Gastrocnemius medialis (tissue), 4 donors: ENCODE measurements at regions of chr15 and their contacts with region 1.

Region 1: DNA sequence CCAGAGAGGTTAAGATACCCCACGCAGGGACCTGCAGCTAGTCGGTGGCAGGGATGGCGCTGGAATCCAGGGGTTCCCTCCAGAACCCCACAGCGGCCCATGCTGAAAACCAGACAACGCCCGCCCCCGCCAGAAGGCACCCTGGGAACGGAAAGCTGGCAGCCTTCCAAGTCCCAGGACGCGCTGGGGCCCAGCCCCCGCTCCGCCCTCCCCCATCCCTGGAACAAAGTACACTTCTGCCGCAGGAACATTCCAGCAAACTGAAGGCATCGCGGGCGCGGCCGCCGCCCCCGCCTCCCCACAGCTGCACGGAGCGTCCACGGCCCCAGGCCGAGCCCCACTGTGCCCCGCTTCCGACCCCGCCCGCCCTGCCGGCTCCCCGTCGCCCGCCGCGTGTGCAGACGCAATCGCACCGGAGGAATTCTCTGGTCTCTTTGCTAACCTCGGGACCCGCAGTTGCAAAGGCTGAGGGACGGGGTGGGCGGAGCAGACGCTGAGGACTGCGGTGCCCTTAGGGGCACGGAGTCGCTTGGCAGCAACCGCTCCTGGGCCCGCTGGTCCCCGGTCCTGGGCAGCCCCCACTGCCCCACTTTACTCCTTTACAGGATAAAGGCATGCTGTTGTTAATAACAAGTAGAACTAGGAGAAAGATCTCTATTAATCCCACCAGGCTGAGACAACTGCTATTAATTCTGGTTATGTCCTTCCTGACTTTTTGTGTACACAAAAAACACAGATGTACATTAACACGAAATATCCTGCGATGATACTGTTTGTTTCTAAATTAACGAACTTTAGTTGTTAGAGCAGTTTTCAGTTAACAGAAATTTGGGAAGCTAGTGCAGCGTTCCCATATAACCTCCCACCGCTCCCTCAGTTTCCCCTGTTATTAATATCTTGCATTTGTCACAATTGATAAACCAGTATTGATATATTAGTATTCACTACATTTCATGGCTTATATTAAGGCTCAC is 45.0 kb upstream of the RNU6-1 start:
- DNase-seq: peak; percentile 55 to 68
- ATAC-seq: peak; percentile 67 to 79
- H3K4me3 ChIP-seq: peak overlapping the region; percentile 59 to 71 (median 64)
- H3K27ac ChIP-seq: peak overlapping the region; percentile 53 to 79 (median 76)
- H3K4me1 ChIP-seq: peaks cover 10 to 19% of the 10 kb centered on the region in 2 donors
- H3K27me3 ChIP-seq: no peaks in the 10 kb centered on the region
- CTCF ChIP-seq: no peak
- POLR2A ChIP-seq: peak in 1 of 2 donors; percentile 29

Region 2: GRCh38 chr15:67413770-67414394 is 470.9 kb before region 1 on chr15:
- in situ Hi-C with region 1: no loop called
- intact Hi-C with region 1: no loop called
- DNase-seq: no peak
- ATAC-seq: no peak
- H3K4me3 ChIP-seq: no peak overlapping the region
- H3K27ac ChIP-seq: no peak overlapping the region
- H3K4me1 ChIP-seq: no peaks in the 10 kb centered on the region
- H3K27me3 ChIP-seq: no peaks in the 10 kb centered on the region
- CTCF ChIP-seq: no peak
- POLR2A ChIP-seq: no peak

Region 3: DNA sequence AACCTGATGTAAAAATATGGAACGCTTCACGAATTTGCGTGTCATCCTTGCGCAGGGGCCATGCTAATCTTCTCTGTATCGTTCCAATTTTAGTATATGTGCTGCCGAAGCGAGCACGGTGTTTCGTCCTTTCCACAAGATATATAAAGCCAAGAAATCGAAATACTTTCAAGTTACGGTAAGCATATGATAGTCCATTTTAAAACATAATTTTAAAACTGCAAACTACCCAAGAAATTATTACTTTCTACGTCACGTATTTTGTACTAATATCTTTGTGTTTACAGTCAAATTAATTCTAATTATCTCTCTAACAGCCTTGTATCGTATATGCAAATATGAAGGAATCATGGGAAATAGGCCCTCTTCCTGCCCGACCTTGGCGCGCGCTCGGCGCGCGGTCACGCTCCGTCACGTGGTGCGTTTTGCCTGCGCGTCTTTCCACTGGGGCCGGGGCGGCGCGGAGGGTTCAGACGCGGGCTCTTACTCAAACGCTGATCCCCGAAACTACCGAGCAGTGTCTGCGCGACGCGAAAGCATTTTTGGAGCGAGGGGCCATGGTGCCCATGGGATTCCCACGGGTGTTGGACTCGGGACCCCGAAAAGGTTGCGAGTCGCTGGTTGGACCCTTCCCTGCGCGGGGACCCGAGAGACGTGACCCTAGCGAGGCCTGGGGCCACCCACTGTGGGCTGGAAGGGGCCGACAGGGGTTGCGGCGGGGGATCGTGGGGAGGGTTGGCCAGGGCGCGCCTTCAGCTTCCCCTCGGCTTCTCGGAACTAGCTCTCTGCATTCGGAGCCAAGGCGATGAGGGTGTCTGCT is 44.7 kb before region 1 on chr15 and contains the start of gene RNU6-1:
- in situ Hi-C with region 1: no loop called
- intact Hi-C with region 1: no loop called
- DNase-seq: peak; percentile 90 to 96
- ATAC-seq: peak; percentile 88 to 94
- H3K4me3 ChIP-seq: peak within 1 kb of the TSS; percentile 94 to 99 (median 96)
- H3K27ac ChIP-seq: peak within 1 kb of the TSS; percentile 97 to 100 (median 99)
- H3K4me1 ChIP-seq: peaks cover 20 to 28% of the 10 kb centered on the region in 2 donors
- H3K27me3 ChIP-seq: no peaks in the 10 kb centered on the region
- CTCF ChIP-seq: peak in 1 of 5 experiments; percentile 31
- POLR2A ChIP-seq: peak; percentile 90 to 95
- total RNA-seq, gene RNU6-1: not detected

Region 4: DNA sequence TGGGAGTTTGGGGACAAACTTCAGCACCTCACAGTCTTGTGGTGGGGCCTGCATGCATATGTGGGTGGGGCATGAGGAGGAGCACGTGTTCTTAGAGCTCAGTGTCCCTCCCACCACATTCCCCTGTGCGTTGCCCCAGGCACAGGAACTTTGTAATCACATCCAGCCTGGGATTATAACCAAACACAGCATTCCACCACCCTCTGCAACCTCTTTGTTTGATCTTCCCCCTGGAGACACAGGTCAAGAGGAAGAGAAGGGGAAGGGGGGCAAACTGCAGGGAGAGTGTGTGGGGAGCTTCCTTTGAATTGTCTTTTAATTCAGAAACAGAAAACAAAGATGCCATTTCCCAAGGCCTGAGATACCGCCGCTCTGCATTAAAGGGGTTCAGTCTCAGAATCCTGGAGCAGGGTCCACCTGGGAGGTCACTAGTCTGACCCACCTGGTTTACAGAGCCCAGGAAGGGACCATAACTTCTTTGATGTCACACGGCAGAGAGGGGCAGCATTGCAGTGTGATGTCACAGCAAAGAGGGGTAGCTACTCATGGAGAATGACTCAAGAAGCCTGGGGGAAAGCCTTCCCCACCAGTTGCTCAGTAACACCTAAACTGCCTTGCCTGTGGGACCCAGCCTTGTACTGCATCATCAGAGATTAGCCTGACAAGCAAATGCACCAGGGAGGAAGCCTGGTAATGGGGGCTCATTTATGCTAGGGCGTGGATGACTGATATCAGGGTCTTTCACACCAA is 61.3 kb after region 1 on chr15:
- in situ Hi-C with region 1: loop called in 1 of 4 experiments (anchors 10 kb)
- intact Hi-C with region 1: no loop called
- DNase-seq: no peak
- ATAC-seq: no peak
- H3K4me3 ChIP-seq: no peak overlapping the region
- H3K27ac ChIP-seq: peak overlapping the region in 2 of 4 donors; percentile 46 to 49
- H3K4me1 ChIP-seq: peaks cover 5 to 6% of the 10 kb centered on the region in 2 donors
- H3K27me3 ChIP-seq: no peaks in the 10 kb centered on the region
- CTCF ChIP-seq: no peak
- POLR2A ChIP-seq: no peak